Head of caudate nucleus (tissue), 42 donors: ENCODE measurements at regions of chr2 and their contacts with region 1.

Region 1: DNA sequence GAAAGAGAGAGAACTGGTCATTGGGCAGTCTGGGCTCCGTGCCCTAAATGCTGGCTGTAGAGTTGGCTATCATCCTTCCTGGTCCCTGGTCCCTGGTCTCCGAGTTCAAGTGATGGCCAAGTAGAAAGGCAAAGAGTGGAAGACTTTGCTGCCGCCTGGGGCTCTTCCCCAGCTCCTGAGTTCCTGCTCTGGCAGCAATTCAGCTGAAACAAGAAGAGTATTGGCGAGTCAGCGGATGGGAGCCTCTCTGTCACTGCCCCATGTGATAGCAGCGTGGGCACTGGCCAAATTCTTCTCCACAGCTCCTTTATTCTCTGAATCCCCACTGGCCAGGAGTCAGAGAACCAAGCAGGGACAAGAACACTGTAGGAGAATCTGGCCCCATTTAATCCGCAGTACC is 351.0 kb upstream of the POU3F3 start:
- DNase-seq: peak; percentile 64 to 97 (median 91)

Region 2: DNA sequence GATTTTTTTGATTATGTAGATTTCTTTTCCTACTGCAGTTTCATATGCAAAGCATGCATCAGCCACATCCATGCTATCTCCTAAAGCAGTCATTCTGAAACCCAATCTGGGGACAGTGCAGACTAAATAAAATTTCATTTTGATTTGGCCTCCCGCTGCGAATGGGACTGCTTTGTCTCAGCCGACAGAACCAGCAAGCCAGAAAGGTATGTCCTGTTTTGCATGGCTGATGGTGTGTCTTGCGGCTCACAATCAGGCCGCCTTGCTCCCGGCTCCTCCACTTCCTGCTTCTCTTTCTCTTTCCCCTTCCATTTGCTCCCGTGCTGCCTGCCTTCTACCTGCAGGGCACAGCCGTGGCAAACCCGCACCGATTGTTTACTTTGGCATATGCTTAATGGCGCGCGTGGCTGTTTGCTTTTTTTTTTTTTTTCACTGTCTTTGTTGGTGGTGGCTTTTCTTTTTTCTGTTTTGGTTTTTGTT is 68.5 kb before region 1 on chr2:
- intact Hi-C with region 1: loop called (anchors 5 kb)
- DNase-seq: peak in 40 of 42 donors; percentile 28 to 78 (median 58)

Region 3: DNA sequence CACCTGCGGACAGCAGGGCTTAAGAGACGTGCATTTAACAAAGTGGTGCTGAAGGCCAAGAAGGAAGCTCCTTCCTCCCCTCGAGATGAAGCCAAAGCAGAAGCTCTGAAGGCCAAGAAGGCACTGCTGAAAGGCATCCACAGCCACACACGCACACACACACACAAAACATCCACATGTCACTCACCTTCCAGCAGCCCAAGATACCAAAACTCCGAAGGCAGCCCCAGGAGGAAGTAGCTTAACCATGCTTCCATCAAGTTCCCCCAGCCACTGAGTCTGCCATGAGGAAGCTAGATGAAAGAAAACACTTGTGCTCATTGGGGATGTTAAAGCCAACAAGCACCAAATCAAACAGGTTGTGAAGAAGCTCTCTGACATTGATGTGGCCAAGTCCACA is 175.3 kb after region 1 on chr2:
- intact Hi-C with region 1: no loop called
- DNase-seq: no peak

Region 4: GRCh38 chr2:104849618-104850141 is 346.8 kb after region 1 on chr2:
- intact Hi-C with region 1: loop called (anchors 5 kb)
- DNase-seq: peak in 41 of 42 donors; percentile 79 to 96 (median 91)